Activated naive CD4-positive, alpha-beta T cell treated with anti-CD3 and anti-CD28 coated beads for 36 hours (primary cell): ENCODE measurements at regions of chrX and their contacts with region 1.

Region 1: GRCh38 chrX:129781134-129781672 is 1.5 kb downstream of the SASH3 start:
- DNase-seq: peak; percentile 91
- H3K4me3 Mint-ChIP-seq: peak overlapping the region; percentile 82
- H3K27ac Mint-ChIP-seq: peak overlapping the region; percentile 97
- H3K4me1 Mint-ChIP-seq: peaks cover 53% of the 10 kb centered on the region
- H3K27me3 Mint-ChIP-seq: no peaks in the 10 kb centered on the region

Region 2: GRCh38 chrX:129665910-129666644 is 115.1 kb before region 1 on chrX:
- CTCF ChIA-PET with region 1: no interaction called
- intact Hi-C with region 1: no loop called
- DNase-seq: no peak
- H3K4me3 Mint-ChIP-seq: no peak overlapping the region
- H3K27ac Mint-ChIP-seq: no peak overlapping the region
- H3K4me1 Mint-ChIP-seq: no peaks in the 10 kb centered on the region
- H3K27me3 Mint-ChIP-seq: no peaks in the 10 kb centered on the region

Region 3: DNA sequence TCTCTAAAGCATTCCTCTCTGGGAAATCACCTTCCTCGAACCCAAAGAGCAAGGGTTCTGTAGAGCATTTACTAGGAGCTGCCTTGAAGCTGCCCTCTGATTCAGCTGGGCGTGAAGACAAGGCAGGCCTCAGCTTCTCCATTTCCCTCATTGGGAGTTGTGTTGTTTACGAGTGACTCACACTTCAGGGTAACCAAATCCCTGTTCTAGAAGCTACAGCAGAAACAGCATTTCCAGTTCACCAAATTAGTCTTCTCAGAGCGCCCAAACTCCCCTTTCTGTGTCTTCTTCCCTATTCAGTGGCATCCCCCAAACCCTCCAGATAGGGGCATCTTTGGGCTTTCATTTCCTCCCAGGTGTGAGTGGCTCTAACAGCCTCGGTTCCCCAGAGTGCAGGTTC is 43.3 kb before region 1 on chrX:
- CTCF ChIA-PET with region 1: interaction called, 3 read pairs
- intact Hi-C with region 1: loop called (anchors 1 kb)
- DNase-seq: no peak
- H3K4me3 Mint-ChIP-seq: no peak overlapping the region
- H3K27ac Mint-ChIP-seq: no peak overlapping the region
- H3K4me1 Mint-ChIP-seq: peaks cover 26% of the 10 kb centered on the region
- H3K27me3 Mint-ChIP-seq: no peaks in the 10 kb centered on the region

Region 4: GRCh38 chrX:129759576-129760061 is 21.6 kb before region 1 on chrX:
- CTCF ChIA-PET with region 1: interaction called, 13 read pairs
- intact Hi-C with region 1: loop called (anchors 1 kb)
- DNase-seq: peak; percentile 81
- H3K4me3 Mint-ChIP-seq: peak overlapping the region; percentile 32
- H3K27ac Mint-ChIP-seq: peak overlapping the region; percentile 68
- H3K4me1 Mint-ChIP-seq: peaks cover 51% of the 10 kb centered on the region
- H3K27me3 Mint-ChIP-seq: no peaks in the 10 kb centered on the region

Region 5: DNA sequence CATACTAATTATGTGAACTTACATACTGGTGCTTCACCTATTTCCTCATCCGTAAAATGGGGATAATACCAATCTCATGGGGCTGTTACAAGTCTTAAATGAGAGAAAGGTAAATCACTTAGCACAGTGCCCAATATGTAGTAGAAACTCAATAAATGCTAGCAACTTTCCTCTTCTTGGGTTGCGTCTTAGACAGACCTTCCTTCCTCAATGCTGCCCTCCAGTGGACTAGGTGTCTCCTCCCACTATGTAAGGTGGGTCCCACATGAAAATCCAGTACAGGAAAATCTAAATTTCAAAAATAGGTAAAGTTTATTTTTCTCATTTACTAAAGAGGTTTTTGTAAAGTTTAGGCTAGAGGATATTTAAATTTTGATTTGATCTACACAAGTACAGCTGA is 41.9 kb after region 1 on chrX:
- CTCF ChIA-PET with region 1: interaction called, 5 read pairs
- intact Hi-C with region 1: loop called (anchors 1 kb)
- DNase-seq: peak; percentile 73
- H3K4me3 Mint-ChIP-seq: no peak overlapping the region
- H3K27ac Mint-ChIP-seq: no peak overlapping the region
- H3K4me1 Mint-ChIP-seq: peaks cover 13% of the 10 kb centered on the region
- H3K27me3 Mint-ChIP-seq: no peaks in the 10 kb centered on the region

Region 6: DNA sequence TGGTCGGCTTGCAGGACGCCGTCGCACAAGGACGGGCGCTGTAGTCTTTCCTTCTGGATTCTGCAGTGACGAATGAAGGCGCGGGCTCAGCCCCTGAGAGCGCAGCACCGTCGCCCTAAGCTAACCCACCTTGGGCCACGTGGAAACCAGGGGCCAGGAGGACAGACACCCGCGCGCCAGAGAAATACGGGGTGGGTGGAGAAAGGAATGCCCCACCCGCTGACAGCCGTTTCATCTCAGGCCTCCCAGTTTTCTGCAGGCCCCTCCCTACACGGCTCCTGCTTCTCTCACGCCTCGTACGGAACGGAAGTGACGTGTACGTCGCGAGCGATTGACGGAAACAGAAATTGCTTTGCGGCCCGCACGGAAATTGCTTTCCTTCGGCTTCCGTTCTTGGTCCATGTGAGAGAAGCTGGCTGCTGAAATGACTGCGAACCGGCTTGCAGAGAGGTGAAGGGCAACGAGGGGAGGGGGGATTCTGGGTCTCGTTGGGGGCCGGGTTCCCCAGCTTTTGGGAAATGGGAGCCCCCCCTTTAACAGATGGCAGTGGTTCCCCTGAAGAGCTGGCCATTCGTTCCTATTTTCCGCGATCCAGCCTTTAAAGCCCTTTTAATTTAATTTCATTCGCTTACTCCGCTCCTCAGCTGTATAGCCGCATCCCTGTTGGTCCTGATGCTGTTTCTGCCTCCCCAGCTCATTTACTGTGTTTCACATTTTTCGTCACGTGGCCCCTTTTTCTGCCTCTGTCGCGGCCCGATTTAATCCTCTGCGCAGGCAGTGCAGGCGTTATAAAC is 124.8 kb after region 1 on chrX and contains the start of gene UTP14A:
- CTCF ChIA-PET with region 1: no interaction called
- intact Hi-C with region 1: loop called (anchors 1 kb)
- DNase-seq: peak; percentile 92
- H3K4me3 Mint-ChIP-seq: peak within 1 kb of the TSS; percentile 84
- H3K27ac Mint-ChIP-seq: peak within 1 kb of the TSS; percentile 82
- H3K4me1 Mint-ChIP-seq: peaks cover 31% of the 10 kb centered on the region
- H3K27me3 Mint-ChIP-seq: no peaks in the 10 kb centered on the region
- total RNA-seq, gene UTP14A: 21.5 to 22.6 TPM

Region 7: DNA sequence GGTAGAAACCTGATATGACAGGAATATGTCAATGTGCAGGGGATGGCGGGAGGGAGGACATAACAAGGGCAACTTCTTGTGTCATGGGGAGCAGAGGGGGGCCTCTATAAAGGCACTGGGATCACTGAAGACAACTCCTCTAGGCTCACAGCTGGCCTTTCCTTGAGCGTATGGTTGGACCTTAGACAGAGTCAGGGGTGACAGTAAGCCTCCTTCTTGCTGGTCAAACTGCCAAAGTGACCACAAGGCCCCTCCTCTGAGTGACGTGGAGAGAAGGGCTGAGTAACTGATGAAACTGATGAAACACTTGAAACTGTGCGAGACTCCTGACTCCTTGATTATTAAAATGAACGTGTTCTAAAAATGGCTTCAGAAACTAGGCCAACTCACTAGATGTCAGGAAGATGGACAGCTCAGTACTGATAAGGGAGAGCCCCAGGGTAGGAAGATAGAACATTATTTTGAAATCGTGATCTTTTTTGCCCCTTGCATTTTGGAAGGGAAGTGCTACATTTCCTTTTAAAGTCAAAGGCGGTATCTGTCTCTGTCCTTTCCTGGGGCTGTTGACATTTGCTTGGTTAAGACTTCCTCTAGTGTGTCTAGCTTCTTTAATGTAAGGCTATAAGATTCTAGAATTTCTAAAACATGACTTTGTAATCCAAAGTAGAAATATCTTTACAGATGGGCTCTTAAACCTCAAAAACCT is 392.1 kb after region 1 on chrX:
- CTCF ChIA-PET with region 1: no interaction called
- intact Hi-C with region 1: loop called (anchors 2 kb)
- DNase-seq: peak; percentile 68
- H3K4me3 Mint-ChIP-seq: peak overlapping the region; percentile 87
- H3K27ac Mint-ChIP-seq: peak overlapping the region; percentile 94
- H3K4me1 Mint-ChIP-seq: peaks cover 45% of the 10 kb centered on the region
- H3K27me3 Mint-ChIP-seq: no peaks in the 10 kb centered on the region